Calu3 (cell line): ENCODE measurements at regions of chr14 and their contacts with region 1.

Region 1: DNA sequence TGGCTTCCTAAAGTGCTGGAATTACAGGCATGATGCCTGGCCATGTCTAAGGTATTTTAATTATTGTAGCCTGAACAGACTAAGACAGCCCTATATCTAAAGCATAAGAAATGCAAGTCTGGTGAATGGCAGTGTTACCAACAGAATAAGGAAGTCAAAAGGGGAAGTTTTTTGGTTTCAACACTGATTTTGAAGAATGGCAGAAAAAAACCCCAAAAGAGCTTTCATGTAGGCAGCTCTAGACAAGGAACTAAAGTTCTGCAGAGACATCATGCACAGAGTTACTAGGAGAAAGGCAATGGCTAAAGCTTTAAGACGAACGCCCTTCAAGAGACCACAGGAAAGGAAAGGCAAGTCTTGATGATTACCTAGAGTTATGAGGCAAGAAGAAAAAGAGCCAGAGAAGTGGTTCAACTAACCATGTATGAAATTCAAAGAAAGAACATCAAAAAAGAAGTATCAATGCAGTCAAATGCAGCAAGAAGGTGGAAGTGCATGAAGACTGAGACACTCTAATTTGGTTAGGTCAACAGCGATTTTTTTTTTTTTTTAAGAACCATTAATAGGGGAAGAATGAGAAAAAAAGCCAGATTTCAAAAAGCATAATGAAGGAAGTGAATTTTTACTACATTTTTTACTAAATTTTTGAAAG is 50.8 kb downstream of the RPS6KA5 start:
- DNase-seq: no peak
- H3K4me3 Mint-ChIP-seq: no peak overlapping the region
- H3K27ac Mint-ChIP-seq: no peak overlapping the region
- H3K4me1 Mint-ChIP-seq: peaks cover 49% of the 10 kb centered on the region
- H3K27me3 Mint-ChIP-seq: no peaks in the 10 kb centered on the region
- CTCF ChIP-seq: no peak

Region 2: GRCh38 chr14:91089958-91090535 is 80.4 kb after region 1 on chr14:
- CTCF ChIA-PET with region 1: no interaction called
- intact Hi-C with region 1: no loop called
- DNase-seq: no peak
- H3K4me3 Mint-ChIP-seq: no peak overlapping the region
- H3K27ac Mint-ChIP-seq: no peak overlapping the region
- H3K4me1 Mint-ChIP-seq: peaks cover 15% of the 10 kb centered on the region
- H3K27me3 Mint-ChIP-seq: peaks cover 11% of the 10 kb centered on the region
- CTCF ChIP-seq: no peak

Region 3: GRCh38 chr14:91114079-91115065 is 104.7 kb after region 1 on chr14:
- CTCF ChIA-PET with region 1: no interaction called
- intact Hi-C with region 1: loop called (anchors 5 kb)
- DNase-seq: peak; percentile 75
- H3K4me3 Mint-ChIP-seq: peak overlapping the region; percentile 90
- H3K27ac Mint-ChIP-seq: peak overlapping the region; percentile 94
- H3K4me1 Mint-ChIP-seq: peaks cover 45% of the 10 kb centered on the region
- H3K27me3 Mint-ChIP-seq: no peaks in the 10 kb centered on the region
- CTCF ChIP-seq: no peak